Activated T-helper 2 cell treated with anti-CD3 and anti-CD28 coated beads, Interferon-gamma antibody, Interleukin-2, Interleukin-4, amounts not matched to agents 10 μg/mL and 5 μg/mL and 100 μg/mL, durations not matched to agents 14 hours and 24 hours and 36 hours (primary cell): ENCODE measurements at regions of chr12 and their contacts with region 1.

Region 1: GRCh38 chr12:96194971-96195844 is 1.0 kb downstream of the ELK3 start:
- DNase-seq: peak; percentile 63
- H3K4me3 Mint-ChIP-seq: peak overlapping the region; percentile 92
- H3K27ac Mint-ChIP-seq: peak overlapping the region; percentile 94
- H3K4me1 Mint-ChIP-seq: peaks cover 54% of the 10 kb centered on the region
- H3K27me3 Mint-ChIP-seq: no peaks in the 10 kb centered on the region

Region 2: DNA sequence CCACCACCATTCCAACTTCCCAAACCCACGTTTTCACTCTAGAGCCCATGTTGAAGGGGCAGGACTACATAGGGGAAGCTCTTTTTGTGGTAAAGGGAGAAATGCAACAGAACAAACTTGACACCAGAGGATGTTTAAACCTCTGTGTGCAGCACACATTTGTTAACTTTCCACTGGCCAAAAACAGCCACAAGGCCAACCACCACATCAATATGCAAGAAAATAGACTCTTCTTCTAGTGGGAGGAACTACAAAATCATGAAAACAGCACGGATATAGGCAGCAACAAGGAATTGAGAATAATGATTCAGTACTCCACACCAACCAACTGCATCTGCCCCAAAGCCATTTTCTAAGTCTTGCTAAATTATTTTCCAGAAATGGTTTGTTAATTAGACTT is 1669.3 kb before region 1 on chr12:
- intact Hi-C with region 1: no loop called
- DNase-seq: no peak
- H3K4me3 Mint-ChIP-seq: no peak overlapping the region
- H3K27ac Mint-ChIP-seq: no peak overlapping the region
- H3K4me1 Mint-ChIP-seq: peaks cover 3% of the 10 kb centered on the region
- H3K27me3 Mint-ChIP-seq: peaks cover 30% of the 10 kb centered on the region

Region 3: GRCh38 chr12:95942524-95943329 is 252.5 kb before region 1 on chr12 and contains the start of gene CCDC38:
- intact Hi-C with region 1: loop called (anchors 5 kb)
- DNase-seq: peak; percentile 77
- H3K4me3 Mint-ChIP-seq: peak within 1 kb of the TSS; percentile 82
- H3K27ac Mint-ChIP-seq: peak within 1 kb of the TSS; percentile 76
- H3K4me1 Mint-ChIP-seq: peaks cover 5% of the 10 kb centered on the region
- H3K27me3 Mint-ChIP-seq: peaks cover 18% of the 10 kb centered on the region
- total RNA-seq, gene CCDC38: 0.07 TPM in 1 of 2 replicates, not detected in the other

Region 4: DNA sequence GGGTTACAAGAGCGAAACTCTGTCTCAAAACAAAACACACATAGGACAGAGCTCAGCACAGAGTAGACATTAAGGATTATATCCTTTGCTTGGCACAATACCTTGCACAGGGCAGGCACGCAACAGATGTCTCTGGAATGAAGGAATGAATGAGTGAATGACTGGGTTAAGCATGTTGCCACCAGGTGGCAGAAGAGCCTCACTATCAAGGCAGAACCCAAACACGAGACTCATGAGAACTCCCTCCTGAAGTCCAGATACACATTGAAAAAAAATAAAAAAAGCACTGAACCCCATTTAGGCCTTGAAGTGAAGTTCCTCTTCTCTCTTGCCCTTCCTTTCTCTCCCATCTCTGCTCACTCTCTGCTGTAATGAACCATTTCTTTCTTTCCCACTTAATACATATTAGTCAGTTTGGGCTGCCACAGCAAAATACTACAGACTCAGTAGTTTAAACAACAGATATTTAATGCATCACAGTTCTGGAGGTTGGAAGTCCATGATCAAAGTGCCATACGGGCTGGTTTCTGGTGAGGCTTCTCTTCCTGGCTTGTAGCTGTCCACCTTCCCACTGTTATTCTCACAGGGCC is 133.2 kb before region 1 on chr12:
- intact Hi-C with region 1: loop called (anchors 1 kb)
- DNase-seq: peak; percentile 60
- H3K4me3 Mint-ChIP-seq: no peak overlapping the region
- H3K27ac Mint-ChIP-seq: no peak overlapping the region
- H3K4me1 Mint-ChIP-seq: peaks cover 22% of the 10 kb centered on the region
- H3K27me3 Mint-ChIP-seq: no peaks in the 10 kb centered on the region

Region 5: DNA sequence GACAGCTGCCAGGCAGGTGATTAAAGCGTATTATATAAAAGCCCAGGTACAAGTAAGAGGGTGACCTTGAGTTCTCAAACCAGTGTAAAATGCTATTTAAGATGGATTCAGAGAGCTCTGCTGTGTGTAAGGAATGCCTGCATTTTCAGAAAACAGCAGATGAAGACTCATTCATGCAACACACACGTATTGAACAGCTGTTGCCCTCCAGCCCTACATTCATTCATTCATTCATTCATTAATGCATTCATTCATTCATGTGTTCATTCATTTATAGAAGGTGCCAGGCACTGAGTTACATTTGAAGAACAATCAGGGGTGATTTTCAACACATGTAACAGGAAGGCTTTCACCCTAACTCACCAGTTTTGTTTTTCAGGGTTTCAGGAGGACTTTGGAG is 28.4 kb before region 1 on chr12:
- intact Hi-C with region 1: no loop called
- DNase-seq: no peak
- H3K4me3 Mint-ChIP-seq: no peak overlapping the region
- H3K27ac Mint-ChIP-seq: no peak overlapping the region
- H3K4me1 Mint-ChIP-seq: peaks cover 5% of the 10 kb centered on the region
- H3K27me3 Mint-ChIP-seq: no peaks in the 10 kb centered on the region

Region 6: DNA sequence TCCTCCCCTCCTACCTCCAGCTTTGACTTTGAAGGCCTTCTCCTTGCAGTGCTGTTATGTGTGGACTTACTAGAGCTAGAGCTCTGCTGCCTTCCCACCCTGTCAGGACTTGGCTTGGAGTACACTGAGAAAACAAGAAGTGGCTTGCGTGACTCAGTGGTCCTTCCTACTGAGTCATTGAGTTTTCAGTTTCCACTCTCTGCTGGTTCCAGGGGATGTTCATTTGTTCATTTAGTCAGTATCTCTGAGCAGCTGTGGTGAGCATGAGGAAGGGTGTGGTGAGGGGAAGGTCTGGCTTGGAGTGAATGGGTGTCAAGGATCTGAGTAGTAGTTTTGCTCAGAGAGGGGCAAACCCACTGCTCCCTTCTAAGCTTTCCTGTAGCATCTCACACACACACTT is 18.2 kb before region 1 on chr12:
- intact Hi-C with region 1: loop called (anchors 1 kb)
- DNase-seq: peak; percentile 60
- H3K4me3 Mint-ChIP-seq: peak overlapping the region; percentile 11
- H3K27ac Mint-ChIP-seq: peak overlapping the region; percentile 53
- H3K4me1 Mint-ChIP-seq: peaks cover 18% of the 10 kb centered on the region
- H3K27me3 Mint-ChIP-seq: no peaks in the 10 kb centered on the region

Region 7: GRCh38 chr12:96327346-96327745 is 132.1 kb after region 1 on chr12:
- intact Hi-C with region 1: loop called (anchors 5 kb)
- DNase-seq: no peak
- H3K4me3 Mint-ChIP-seq: no peak overlapping the region
- H3K27ac Mint-ChIP-seq: no peak overlapping the region
- H3K4me1 Mint-ChIP-seq: peaks cover 50% of the 10 kb centered on the region
- H3K27me3 Mint-ChIP-seq: no peaks in the 10 kb centered on the region